ENCODE measurements at regions of chr4 and their contacts with region 1.

Region 1: GRCh38 chr4:25862411-25863346 is at the start of gene SEL1L3:
- DNase-seq: peak in 8 of 9 donors; percentile 13 to 77 (median 29)
- ATAC-seq: peak; percentile 59
- H3K4me3 ChIP-seq: peak within 1 kb of the TSS; percentile 68
- H3K4me3 Mint-ChIP-seq: peak within 1 kb of the TSS; percentile 94 to 100 (median 98)
- H3K27ac ChIP-seq: peak within 1 kb of the TSS; percentile 71
- H3K27ac Mint-ChIP-seq: peak within 1 kb of the TSS; percentile 88 to 99 (median 96)
- H3K4me1 ChIP-seq: peaks cover 30 to 32% of the 10 kb centered on the region in 2 donors
- H3K4me1 Mint-ChIP-seq: peaks cover 32 to 44% (median 39%) of the 10 kb centered on the region in 7 donors
- H3K27me3 ChIP-seq: no peaks in the 10 kb centered on the region
- H3K27me3 Mint-ChIP-seq: peaks cover 0 to 3% (median 0%) of the 10 kb centered on the region in 5 donors
- total RNA-seq, gene SEL1L3: 38.1 to 55.8 (median 47.0) TPM

Region 2: GRCh38 chr4:25376754-25377571 is 485.7 kb before region 1 on chr4 and contains the start of gene ANAPC4:
- CTCF ChIA-PET with region 1: no interaction called
- POLR2A ChIA-PET with region 1: no interaction called
- intact Hi-C with region 1: loop called in 1 of 2 experiments (anchors 5 kb)
- DNase-seq: peak; percentile 85 to 97 (median 92)
- ATAC-seq: peak; percentile 97
- H3K4me3 ChIP-seq: peak within 1 kb of the TSS; percentile 96
- H3K4me3 Mint-ChIP-seq: peak within 1 kb of the TSS in 2 of 10 donors; percentile 78 to 83
- H3K27ac ChIP-seq: peak within 1 kb of the TSS; percentile 76
- H3K27ac Mint-ChIP-seq: peak within 1 kb of the TSS in 7 of 9 donors; percentile 64 to 93 (median 83)
- H3K4me1 ChIP-seq: peaks cover 11 to 17% of the 10 kb centered on the region in 2 donors
- H3K4me1 Mint-ChIP-seq: peaks cover 0 to 18% (median 13%) of the 10 kb centered on the region in 7 donors
- H3K27me3 ChIP-seq: no peaks in the 10 kb centered on the region
- H3K27me3 Mint-ChIP-seq: no peaks in the 10 kb centered on the region
- total RNA-seq, gene ANAPC4: 40.6 to 55.3 (median 50.4) TPM

Region 3: GRCh38 chr4:25842229-25842845 is 20.3 kb before region 1 on chr4:
- CTCF ChIA-PET with region 1: no interaction called
- POLR2A ChIA-PET with region 1: interaction called, 6 read pairs
- intact Hi-C with region 1: loop called (anchors 1 kb)
- DNase-seq: peak in 7 of 9 donors; percentile 24 to 51 (median 46)
- ATAC-seq: peak; percentile 78
- H3K4me3 ChIP-seq: no peak overlapping the region
- H3K4me3 Mint-ChIP-seq: peak overlapping the region; percentile 1 to 63 (median 40)
- H3K27ac ChIP-seq: no peak overlapping the region
- H3K27ac Mint-ChIP-seq: peak overlapping the region in 4 of 9 donors; percentile 16 to 84 (median 40)
- H3K4me1 ChIP-seq: peaks cover 5 to 14% of the 10 kb centered on the region in 2 donors
- H3K4me1 Mint-ChIP-seq: peaks cover 27 to 55% (median 37%) of the 10 kb centered on the region in 7 donors
- H3K27me3 ChIP-seq: no peaks in the 10 kb centered on the region
- H3K27me3 Mint-ChIP-seq: no peaks in the 10 kb centered on the region

Region 4: GRCh38 chr4:26197018-26197779 is 334.5 kb after region 1 on chr4:
- CTCF ChIA-PET with region 1: no interaction called
- POLR2A ChIA-PET with region 1: no interaction called
- intact Hi-C with region 1: loop called in 1 of 2 experiments (anchors 5 kb)
- DNase-seq: peak in 5 of 9 donors; percentile 1 to 74 (median 6)
- ATAC-seq: peak; percentile 78
- H3K4me3 ChIP-seq: peak overlapping the region; percentile 31
- H3K4me3 Mint-ChIP-seq: peak overlapping the region in 9 of 10 donors; percentile 21 to 82 (median 63)
- H3K27ac ChIP-seq: peak overlapping the region; percentile 38
- H3K27ac Mint-ChIP-seq: peak overlapping the region in 8 of 9 donors; percentile 42 to 95 (median 80)
- H3K4me1 ChIP-seq: peaks cover 17 to 37% of the 10 kb centered on the region in 2 donors
- H3K4me1 Mint-ChIP-seq: peaks cover 18 to 80% (median 30%) of the 10 kb centered on the region in 7 donors
- H3K27me3 ChIP-seq: no peaks in the 10 kb centered on the region
- H3K27me3 Mint-ChIP-seq: no peaks in the 10 kb centered on the region

Region 5: DNA sequence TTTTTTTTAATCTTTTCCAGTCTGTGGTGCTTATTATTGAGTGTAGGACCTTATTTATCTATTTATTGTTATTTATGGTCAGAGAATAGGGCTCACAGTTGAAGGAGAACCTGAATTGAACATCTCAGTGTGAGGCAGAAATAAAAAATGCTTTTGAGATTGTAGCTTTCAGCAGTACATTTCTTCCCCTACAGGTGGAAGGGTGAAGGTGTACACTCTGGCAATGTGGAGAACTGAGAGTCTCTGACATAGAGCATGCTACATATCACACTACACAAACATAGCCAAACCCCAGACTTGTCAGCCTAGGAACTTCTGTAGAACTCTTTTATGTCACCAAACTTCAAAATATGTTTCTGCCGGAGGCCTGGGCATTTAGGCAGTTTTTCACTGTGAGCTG is 1138.1 kb after region 1 on chr4:
- CTCF ChIA-PET with region 1: no interaction called
- POLR2A ChIA-PET with region 1: no interaction called
- intact Hi-C with region 1: loop called in 1 of 2 experiments (anchors 10 kb)
- DNase-seq: peak in 6 of 9 donors; percentile 15 to 44 (median 32)
- ATAC-seq: peak; percentile 86
- H3K4me3 ChIP-seq: no peak overlapping the region
- H3K4me3 Mint-ChIP-seq: no peak overlapping the region
- H3K27ac ChIP-seq: no peak overlapping the region
- H3K27ac Mint-ChIP-seq: peak overlapping the region in 8 of 9 donors; percentile 33 to 78 (median 62)
- H3K4me1 ChIP-seq: peaks cover 12 to 16% of the 10 kb centered on the region in 2 donors
- H3K4me1 Mint-ChIP-seq: peaks cover 19 to 65% (median 53%) of the 10 kb centered on the region in 7 donors
- H3K27me3 ChIP-seq: no peaks in the 10 kb centered on the region
- H3K27me3 Mint-ChIP-seq: no peaks in the 10 kb centered on the region

Measured in naive thymus-derived CD4-positive, alpha-beta T cell (primary cell).